ENCODE measurements at regions of chr9 and their contacts with region 1.

Region 1: DNA sequence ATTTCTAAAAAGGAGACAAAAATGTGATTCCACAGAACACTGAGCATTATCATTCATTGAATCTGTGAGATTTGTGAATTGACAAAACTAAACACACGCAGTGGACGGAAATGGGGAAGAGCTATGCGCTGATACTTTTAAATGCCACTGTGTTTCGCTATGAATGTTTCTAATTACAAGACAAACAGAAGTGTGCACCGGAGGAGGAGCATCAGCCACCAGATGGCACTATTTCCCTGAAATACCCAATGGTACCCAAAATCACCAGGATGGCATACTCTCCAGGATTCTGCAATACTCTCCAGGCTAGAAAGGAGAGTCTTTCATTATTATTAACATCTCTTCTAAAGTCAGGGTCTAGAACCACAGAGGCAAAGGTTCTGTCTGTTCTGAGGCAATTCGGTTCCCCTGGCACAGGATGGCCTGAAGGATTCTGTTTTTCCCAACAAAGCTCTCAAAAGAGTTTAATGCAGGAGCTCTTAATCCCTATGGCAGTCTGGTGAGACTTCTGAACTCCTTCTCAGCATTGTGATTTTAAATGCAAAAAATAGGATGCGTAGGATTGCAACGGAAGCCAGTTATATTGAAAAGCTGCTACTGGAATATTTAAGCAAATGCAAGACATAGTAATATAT is 13.8 kb upstream of the PUM3 start:
- DNase-seq: peak; percentile 89
- H3K4me3 Mint-ChIP-seq: no peak overlapping the region
- H3K27ac Mint-ChIP-seq: no peak overlapping the region
- H3K4me1 Mint-ChIP-seq: peaks cover 6% of the 10 kb centered on the region
- H3K27me3 Mint-ChIP-seq: peaks cover 29% of the 10 kb centered on the region

Region 2: GRCh38 chr9:2889023-2889422 is 31.3 kb after region 1 on chr9:
- intact Hi-C with region 1: no loop called
- DNase-seq: no peak
- H3K4me3 Mint-ChIP-seq: no peak overlapping the region
- H3K27ac Mint-ChIP-seq: no peak overlapping the region
- H3K4me1 Mint-ChIP-seq: no peaks in the 10 kb centered on the region
- H3K27me3 Mint-ChIP-seq: peaks cover 7% of the 10 kb centered on the region

Region 3: DNA sequence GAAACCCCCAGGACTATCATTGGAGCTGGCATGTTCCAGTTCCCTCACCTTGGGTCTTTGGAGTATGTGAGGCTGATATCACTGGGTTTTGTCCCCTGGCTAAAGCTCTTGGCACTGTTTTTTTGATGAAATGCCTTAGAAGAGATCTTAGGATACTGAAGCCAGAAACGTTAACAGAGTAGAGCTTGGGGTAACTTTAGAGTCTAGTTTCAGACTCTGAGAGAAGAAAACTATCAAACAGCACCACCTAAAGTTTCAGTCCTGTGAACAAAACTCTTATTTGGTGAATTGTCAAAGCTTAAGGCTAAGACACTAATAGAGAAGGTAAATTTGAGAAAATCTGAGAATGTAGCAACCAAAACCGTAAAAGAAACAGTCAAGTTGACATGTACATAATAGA is 97.9 kb after region 1 on chr9:
- intact Hi-C with region 1: no loop called
- DNase-seq: no peak
- H3K4me3 Mint-ChIP-seq: no peak overlapping the region
- H3K27ac Mint-ChIP-seq: no peak overlapping the region
- H3K4me1 Mint-ChIP-seq: no peaks in the 10 kb centered on the region
- H3K27me3 Mint-ChIP-seq: peaks cover 4% of the 10 kb centered on the region

Region 4: DNA sequence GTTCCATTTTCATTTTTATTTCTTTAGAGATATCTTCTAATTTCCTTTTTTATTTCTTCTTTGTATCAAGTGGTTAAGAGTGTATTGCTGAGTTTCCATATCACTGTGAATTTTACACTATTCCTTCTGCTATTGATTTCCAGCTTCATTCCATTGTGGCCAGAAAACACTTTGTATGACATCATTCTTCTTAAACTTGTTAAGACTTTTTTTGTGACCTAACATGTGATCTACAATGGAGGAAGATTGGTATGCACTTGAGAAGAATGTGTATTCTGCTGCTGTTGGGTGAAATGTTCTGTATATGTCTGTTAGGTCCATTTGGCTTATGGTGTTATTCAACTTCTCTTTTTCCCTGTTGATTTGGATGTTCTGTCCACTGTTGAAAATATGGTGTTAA is 260.4 kb after region 1 on chr9:
- intact Hi-C with region 1: no loop called
- DNase-seq: no peak
- H3K4me3 Mint-ChIP-seq: no peak overlapping the region
- H3K27ac Mint-ChIP-seq: no peak overlapping the region
- H3K4me1 Mint-ChIP-seq: no peaks in the 10 kb centered on the region
- H3K27me3 Mint-ChIP-seq: no peaks in the 10 kb centered on the region

Region 5: GRCh38 chr9:3181049-3181953 is 323.6 kb after region 1 on chr9:
- intact Hi-C with region 1: loop called (anchors 2 kb)
- DNase-seq: peak; percentile 76
- H3K4me3 Mint-ChIP-seq: peak overlapping the region; percentile 69
- H3K27ac Mint-ChIP-seq: no peak overlapping the region
- H3K4me1 Mint-ChIP-seq: no peaks in the 10 kb centered on the region
- H3K27me3 Mint-ChIP-seq: peaks cover 35% of the 10 kb centered on the region

Region 6: GRCh38 chr9:3441197-3441816 is 583.6 kb after region 1 on chr9:
- intact Hi-C with region 1: loop called (anchors 1 kb)
- DNase-seq: peak; percentile 81
- H3K4me3 Mint-ChIP-seq: no peak overlapping the region
- H3K27ac Mint-ChIP-seq: no peak overlapping the region
- H3K4me1 Mint-ChIP-seq: no peaks in the 10 kb centered on the region
- H3K27me3 Mint-ChIP-seq: no peaks in the 10 kb centered on the region

Region 7: GRCh38 chr9:4375424-4376200 is 1517.9 kb after region 1 on chr9:
- intact Hi-C with region 1: loop called (anchors 5 kb)
- DNase-seq: peak; percentile 48
- H3K4me3 Mint-ChIP-seq: no peak overlapping the region
- H3K27ac Mint-ChIP-seq: no peak overlapping the region
- H3K4me1 Mint-ChIP-seq: no peaks in the 10 kb centered on the region
- H3K27me3 Mint-ChIP-seq: peaks cover 16% of the 10 kb centered on the region